Naive thymus-derived CD4-positive, alpha-beta T cell (primary cell): ENCODE measurements at regions of chr5 and their contacts with region 1.

Region 1: DNA sequence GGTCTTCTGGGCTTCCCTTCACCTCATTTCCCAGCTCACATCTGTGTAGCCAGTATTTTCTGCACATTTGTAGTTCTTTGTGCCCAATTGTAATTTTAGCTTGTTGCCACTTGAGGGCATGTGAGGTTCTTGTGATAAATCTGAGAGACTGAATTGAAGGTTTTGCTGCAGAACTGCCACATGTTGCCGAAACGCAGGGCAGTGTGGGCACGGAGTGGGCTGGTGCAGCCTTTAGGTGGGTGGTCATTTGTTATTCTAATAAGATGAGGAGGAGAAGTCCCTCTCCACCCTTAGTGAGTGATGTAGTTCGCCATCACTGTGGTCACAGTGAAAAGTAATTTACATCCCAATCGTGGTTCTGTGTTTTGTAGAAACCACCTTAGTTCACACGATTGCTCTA is 21.2 kb downstream of the OTULIN start:
- DNase-seq: peak in 8 of 9 donors; percentile 41 to 70 (median 62)
- ATAC-seq: peak; percentile 87
- H3K4me3 ChIP-seq: peak overlapping the region; percentile 26
- H3K4me3 Mint-ChIP-seq: peak overlapping the region; percentile 49 to 85 (median 72)
- H3K27ac ChIP-seq: no peak overlapping the region
- H3K27ac Mint-ChIP-seq: peak overlapping the region; percentile 41 to 97 (median 77)
- H3K4me1 ChIP-seq: peaks cover 4% of the 10 kb centered on the region in 2 donors
- H3K4me1 Mint-ChIP-seq: peaks cover 4 to 20% (median 14%) of the 10 kb centered on the region in 7 donors
- H3K27me3 ChIP-seq: no peaks in the 10 kb centered on the region
- H3K27me3 Mint-ChIP-seq: no peaks in the 10 kb centered on the region

Region 2: DNA sequence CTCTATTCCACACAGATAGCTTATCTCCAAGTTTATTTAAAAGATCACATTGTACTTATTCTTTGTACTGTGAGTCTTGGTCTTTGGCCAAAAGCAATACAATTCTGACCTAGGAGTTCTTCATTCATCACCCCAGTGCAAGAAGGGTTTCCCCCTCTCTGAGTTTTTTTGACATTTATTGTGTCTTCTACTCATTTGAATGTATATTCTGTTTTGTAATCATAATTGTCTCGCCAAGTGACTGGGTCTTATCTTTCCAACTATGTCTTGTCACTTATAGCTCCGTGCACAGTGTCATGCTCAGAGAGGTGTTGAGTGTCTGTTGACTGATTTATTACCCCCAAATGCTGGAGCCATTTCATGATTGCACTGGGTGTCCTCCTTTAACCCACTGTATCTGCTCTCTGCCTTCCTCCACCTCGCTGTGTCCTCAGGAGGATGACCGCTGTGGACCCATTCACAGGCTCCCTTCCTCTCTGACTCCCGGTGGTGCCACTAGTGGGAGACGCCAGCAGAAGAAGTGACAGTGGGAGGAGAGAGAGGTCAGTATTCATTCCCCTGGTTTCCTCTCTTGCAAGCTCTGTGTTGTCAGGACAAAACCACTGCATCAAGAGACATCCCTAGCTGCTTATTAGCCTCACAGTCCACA is 553.8 kb before region 1 on chr5:
- CTCF ChIA-PET with region 1: no interaction called
- POLR2A ChIA-PET with region 1: no interaction called
- intact Hi-C with region 1: no loop called
- DNase-seq: no peak
- ATAC-seq: no peak
- H3K4me3 ChIP-seq: no peak overlapping the region
- H3K4me3 Mint-ChIP-seq: no peak overlapping the region
- H3K27ac ChIP-seq: no peak overlapping the region
- H3K27ac Mint-ChIP-seq: no peak overlapping the region
- H3K4me1 ChIP-seq: no peaks in the 10 kb centered on the region
- H3K4me1 Mint-ChIP-seq: no peaks in the 10 kb centered on the region
- H3K27me3 ChIP-seq: no peaks in the 10 kb centered on the region
- H3K27me3 Mint-ChIP-seq: peaks cover 4 to 42% (median 33%) of the 10 kb centered on the region in 5 donors

Region 3: DNA sequence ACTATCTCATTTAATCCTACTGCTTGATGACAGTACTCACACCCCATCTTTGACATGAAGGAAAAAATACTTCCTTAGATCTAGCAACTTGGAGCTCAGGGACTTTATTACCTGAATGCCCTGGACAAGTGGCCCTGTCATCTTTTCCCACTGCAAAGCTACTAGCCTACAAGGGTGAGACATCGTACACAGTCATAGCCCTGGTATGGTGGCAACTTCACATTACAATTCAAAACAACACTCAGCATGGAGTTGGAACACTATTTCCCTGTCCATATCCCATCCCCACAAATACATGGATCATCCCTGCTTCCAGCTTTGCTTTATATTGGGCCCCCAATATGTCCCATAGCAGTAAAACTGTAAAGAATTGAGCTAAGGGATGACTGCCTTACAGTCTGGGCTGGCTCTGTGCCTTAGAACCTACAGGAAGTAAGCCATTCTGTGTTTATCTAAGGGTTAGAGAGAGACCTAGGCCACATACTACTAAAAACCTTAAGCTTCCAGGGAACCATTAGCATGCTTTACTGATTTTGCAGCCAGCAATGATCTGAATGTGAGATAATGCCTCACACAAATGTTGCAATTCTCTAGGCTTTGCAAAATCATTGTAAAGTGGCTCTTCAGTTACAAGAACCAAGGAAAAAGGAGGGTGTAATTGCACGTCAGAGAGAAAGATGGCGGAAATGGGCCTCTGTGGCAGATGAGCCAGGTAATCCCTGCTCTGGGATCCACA is 34.6 kb after region 1 on chr5:
- CTCF ChIA-PET with region 1: interaction called, 49 read pairs
- POLR2A ChIA-PET with region 1: interaction called, 6 read pairs
- intact Hi-C with region 1: no loop called
- DNase-seq: no peak
- ATAC-seq: no peak
- H3K4me3 ChIP-seq: no peak overlapping the region
- H3K4me3 Mint-ChIP-seq: peak overlapping the region in 3 of 10 donors; percentile 8 to 27 (median 16)
- H3K27ac ChIP-seq: no peak overlapping the region
- H3K27ac Mint-ChIP-seq: peak overlapping the region in 8 of 9 donors; percentile 33 to 85 (median 76)
- H3K4me1 ChIP-seq: peaks cover 0 to 14% of the 10 kb centered on the region in 2 donors
- H3K4me1 Mint-ChIP-seq: peaks cover 17 to 53% (median 50%) of the 10 kb centered on the region in 7 donors
- H3K27me3 ChIP-seq: no peaks in the 10 kb centered on the region
- H3K27me3 Mint-ChIP-seq: no peaks in the 10 kb centered on the region

Region 4: GRCh38 chr5:14743601-14744295 is 58.0 kb after region 1 on chr5:
- CTCF ChIA-PET with region 1: interaction called, 3 read pairs
- POLR2A ChIA-PET with region 1: no interaction called
- intact Hi-C with region 1: loop called in 1 of 2 experiments (anchors 5 kb)
- DNase-seq: no peak
- ATAC-seq: no peak
- H3K4me3 ChIP-seq: no peak overlapping the region
- H3K4me3 Mint-ChIP-seq: no peak overlapping the region
- H3K27ac ChIP-seq: no peak overlapping the region
- H3K27ac Mint-ChIP-seq: peak overlapping the region in 3 of 9 donors; percentile 5 to 77 (median 71)
- H3K4me1 ChIP-seq: peaks cover 0 to 3% of the 10 kb centered on the region in 2 donors
- H3K4me1 Mint-ChIP-seq: peaks cover 8 to 44% (median 34%) of the 10 kb centered on the region in 7 donors
- H3K27me3 ChIP-seq: no peaks in the 10 kb centered on the region
- H3K27me3 Mint-ChIP-seq: no peaks in the 10 kb centered on the region

Region 5: DNA sequence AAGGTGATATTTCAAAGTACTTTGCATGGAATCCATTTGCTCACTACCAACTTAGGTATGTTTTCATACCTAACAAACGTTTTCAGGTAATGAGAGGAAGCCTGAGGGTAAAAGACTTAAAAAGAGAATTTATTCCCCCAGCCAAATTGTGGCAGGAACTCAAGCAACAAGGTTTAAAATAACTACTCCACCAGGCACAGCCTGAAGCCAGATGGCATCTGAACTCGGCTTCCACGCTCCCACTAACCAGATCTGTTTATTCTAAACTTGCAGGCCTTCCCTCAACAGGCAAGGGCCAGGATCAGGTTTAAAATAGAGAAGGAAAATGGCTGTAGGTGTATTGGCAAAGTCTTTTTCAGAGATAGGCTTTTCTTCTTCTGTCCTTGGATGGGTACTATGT is 68.2 kb after region 1 on chr5:
- CTCF ChIA-PET with region 1: no interaction called
- POLR2A ChIA-PET with region 1: no interaction called
- intact Hi-C with region 1: no loop called
- DNase-seq: no peak
- ATAC-seq: no peak
- H3K4me3 ChIP-seq: no peak overlapping the region
- H3K4me3 Mint-ChIP-seq: no peak overlapping the region
- H3K27ac ChIP-seq: no peak overlapping the region
- H3K27ac Mint-ChIP-seq: peak overlapping the region in 2 of 9 donors; percentile 11 to 22
- H3K4me1 ChIP-seq: no peaks in the 10 kb centered on the region
- H3K4me1 Mint-ChIP-seq: peaks cover 0 to 13% (median 0%) of the 10 kb centered on the region in 7 donors
- H3K27me3 ChIP-seq: no peaks in the 10 kb centered on the region
- H3K27me3 Mint-ChIP-seq: no peaks in the 10 kb centered on the region

Region 6: GRCh38 chr5:14946815-14947640 is 261.3 kb after region 1 on chr5:
- CTCF ChIA-PET with region 1: interaction called, 6 read pairs
- POLR2A ChIA-PET with region 1: no interaction called
- intact Hi-C with region 1: loop called in 1 of 2 experiments (anchors 1 kb)
- DNase-seq: peak in 7 of 9 donors; percentile 34 to 66 (median 56)
- ATAC-seq: peak; percentile 92
- H3K4me3 ChIP-seq: no peak overlapping the region
- H3K4me3 Mint-ChIP-seq: no peak overlapping the region
- H3K27ac ChIP-seq: no peak overlapping the region
- H3K27ac Mint-ChIP-seq: no peak overlapping the region
- H3K4me1 ChIP-seq: no peaks in the 10 kb centered on the region
- H3K4me1 Mint-ChIP-seq: peaks cover 0 to 9% (median 5%) of the 10 kb centered on the region in 7 donors
- H3K27me3 ChIP-seq: no peaks in the 10 kb centered on the region
- H3K27me3 Mint-ChIP-seq: peaks cover 0 to 5% (median 4%) of the 10 kb centered on the region in 5 donors

Region 7: DNA sequence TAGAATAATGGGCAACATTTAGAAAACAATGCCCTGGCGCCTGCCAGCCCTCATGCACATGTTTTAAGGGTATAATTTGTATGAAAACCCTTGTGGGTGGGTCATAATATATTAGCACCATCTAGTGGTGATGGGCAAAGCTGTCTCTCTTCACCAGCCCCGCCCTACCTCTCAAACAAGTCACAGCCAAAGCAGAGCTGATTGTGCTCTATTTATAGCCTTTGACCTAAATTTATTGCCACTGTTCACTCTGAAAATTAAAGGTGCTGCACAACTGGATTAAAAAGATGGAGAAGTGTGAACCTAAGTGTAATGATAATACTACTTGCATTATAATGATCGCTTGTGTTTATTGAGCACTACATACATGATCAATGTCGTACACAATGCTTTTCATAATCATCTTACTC is 317.8 kb after region 1 on chr5:
- CTCF ChIA-PET with region 1: interaction called, 36 read pairs
- POLR2A ChIA-PET with region 1: no interaction called
- intact Hi-C with region 1: loop called (anchors 1 kb)
- DNase-seq: peak; percentile 10 to 77 (median 69)
- ATAC-seq: peak; percentile 96
- H3K4me3 ChIP-seq: no peak overlapping the region
- H3K4me3 Mint-ChIP-seq: no peak overlapping the region
- H3K27ac ChIP-seq: no peak overlapping the region
- H3K27ac Mint-ChIP-seq: peak overlapping the region in 1 of 9 donors; percentile 33
- H3K4me1 ChIP-seq: no peaks in the 10 kb centered on the region
- H3K4me1 Mint-ChIP-seq: peaks cover 0 to 20% (median 0%) of the 10 kb centered on the region in 7 donors
- H3K27me3 ChIP-seq: peaks cover 0 to 3% of the 10 kb centered on the region in 2 donors
- H3K27me3 Mint-ChIP-seq: peaks cover 0 to 38% (median 0%) of the 10 kb centered on the region in 5 donors